CD8-positive, alpha-beta memory T cell (primary cell): ENCODE measurements at regions of chr11 and their contacts with region 1.

Region 1: GRCh38 chr11:62591448-62592145 is at the start of gene TUT1:
- DNase-seq: peak; percentile 91 to 98 (median 97)
- H3K4me3 ChIP-seq: peak within 1 kb of the TSS; percentile 83
- H3K4me3 Mint-ChIP-seq: peak within 1 kb of the TSS; percentile 84 to 98 (median 95)
- H3K27ac ChIP-seq: peak within 1 kb of the TSS; percentile 92
- H3K27ac Mint-ChIP-seq: peak within 1 kb of the TSS; percentile 84 to 99 (median 98)
- H3K4me1 ChIP-seq: peaks cover 41% of the 10 kb centered on the region
- H3K4me1 Mint-ChIP-seq: peaks cover 36 to 71% (median 59%) of the 10 kb centered on the region in 3 donors
- H3K27me3 ChIP-seq: no peaks in the 10 kb centered on the region
- H3K27me3 Mint-ChIP-seq: peaks cover 0 to 3% of the 10 kb centered on the region in 2 donors
- total RNA-seq, gene TUT1: 30.8 to 32.7 TPM

Region 2: DNA sequence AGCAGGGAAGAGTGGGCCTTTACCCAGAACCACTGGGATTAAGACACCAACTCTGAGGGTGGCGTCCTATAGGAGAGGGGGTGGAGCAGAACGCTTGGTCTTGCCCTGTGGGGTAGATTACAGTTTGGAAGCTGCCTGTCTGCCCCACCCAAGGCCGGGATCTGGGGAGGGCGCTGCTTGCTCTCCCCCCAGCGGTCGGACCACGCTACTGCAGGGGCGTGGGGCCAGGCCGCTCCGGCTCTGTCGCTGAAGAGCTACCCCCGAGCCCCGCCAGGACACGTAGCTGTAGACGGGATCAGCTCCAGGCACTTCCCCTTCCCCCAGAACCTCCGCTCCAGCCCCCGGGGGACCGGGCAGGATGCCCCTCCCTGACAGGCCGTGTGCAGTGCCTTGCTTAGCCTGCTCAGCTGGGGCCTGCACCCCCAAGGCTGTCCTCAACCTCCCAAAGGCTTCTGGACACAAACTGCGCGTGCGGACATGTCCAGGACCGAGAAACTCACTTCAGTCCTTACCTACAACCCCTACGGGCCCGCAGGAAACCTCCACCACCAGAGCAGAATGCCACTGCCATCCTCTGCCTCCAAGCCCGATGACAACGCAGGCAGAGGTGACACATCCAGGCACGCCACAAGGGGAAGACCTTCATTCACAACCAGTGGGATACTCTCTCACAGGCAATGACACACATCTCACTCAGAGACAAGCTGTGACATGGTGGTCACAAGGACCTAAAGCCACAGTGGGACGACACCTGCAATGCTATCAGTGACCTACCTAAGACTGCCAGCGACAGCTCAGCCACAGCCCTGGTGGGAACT is 48.6 kb before region 1 on chr11:
- CTCF ChIA-PET with region 1: interaction called, 28 read pairs
- POLR2A ChIA-PET with region 1: interaction called, 3 read pairs
- DNase-seq: peak; percentile 61 to 86 (median 70)
- H3K4me3 ChIP-seq: peak overlapping the region; percentile 76
- H3K4me3 Mint-ChIP-seq: peak overlapping the region; percentile 92 to 99 (median 98)
- H3K27ac ChIP-seq: peak overlapping the region; percentile 96
- H3K27ac Mint-ChIP-seq: peak overlapping the region; percentile 92 to 100 (median 97)
- H3K4me1 ChIP-seq: peaks cover 72% of the 10 kb centered on the region
- H3K4me1 Mint-ChIP-seq: peaks cover 66 to 83% (median 74%) of the 10 kb centered on the region in 3 donors
- H3K27me3 ChIP-seq: no peaks in the 10 kb centered on the region
- H3K27me3 Mint-ChIP-seq: peaks cover 0 to 3% of the 10 kb centered on the region in 2 donors

Region 3: GRCh38 chr11:62612366-62613290 is 21.0 kb after region 1 on chr11 and contains the starts of genes EML3 and ROM1:
- CTCF ChIA-PET with region 1: interaction called, 12 read pairs
- POLR2A ChIA-PET with region 1: interaction called, 32 read pairs
- DNase-seq: peak; percentile 81 to 93 (median 85)
- H3K4me3 ChIP-seq: peak within 1 kb of the TSS; percentile 76
- H3K4me3 Mint-ChIP-seq: peak within 1 kb of the TSS; percentile 89 to 99 (median 95)
- H3K27ac ChIP-seq: peak within 1 kb of the TSS; percentile 83
- H3K27ac Mint-ChIP-seq: peak within 1 kb of the TSS; percentile 92 to 99 (median 97)
- H3K4me1 ChIP-seq: peaks cover 30% of the 10 kb centered on the region
- H3K4me1 Mint-ChIP-seq: peaks cover 39 to 64% (median 42%) of the 10 kb centered on the region in 3 donors
- H3K27me3 ChIP-seq: no peaks in the 10 kb centered on the region
- H3K27me3 Mint-ChIP-seq: no peaks in the 10 kb centered on the region
- total RNA-seq, gene EML3: 133 to 134 TPM
- total RNA-seq, gene ROM1: 4.9 to 5.3 TPM

Region 4: DNA sequence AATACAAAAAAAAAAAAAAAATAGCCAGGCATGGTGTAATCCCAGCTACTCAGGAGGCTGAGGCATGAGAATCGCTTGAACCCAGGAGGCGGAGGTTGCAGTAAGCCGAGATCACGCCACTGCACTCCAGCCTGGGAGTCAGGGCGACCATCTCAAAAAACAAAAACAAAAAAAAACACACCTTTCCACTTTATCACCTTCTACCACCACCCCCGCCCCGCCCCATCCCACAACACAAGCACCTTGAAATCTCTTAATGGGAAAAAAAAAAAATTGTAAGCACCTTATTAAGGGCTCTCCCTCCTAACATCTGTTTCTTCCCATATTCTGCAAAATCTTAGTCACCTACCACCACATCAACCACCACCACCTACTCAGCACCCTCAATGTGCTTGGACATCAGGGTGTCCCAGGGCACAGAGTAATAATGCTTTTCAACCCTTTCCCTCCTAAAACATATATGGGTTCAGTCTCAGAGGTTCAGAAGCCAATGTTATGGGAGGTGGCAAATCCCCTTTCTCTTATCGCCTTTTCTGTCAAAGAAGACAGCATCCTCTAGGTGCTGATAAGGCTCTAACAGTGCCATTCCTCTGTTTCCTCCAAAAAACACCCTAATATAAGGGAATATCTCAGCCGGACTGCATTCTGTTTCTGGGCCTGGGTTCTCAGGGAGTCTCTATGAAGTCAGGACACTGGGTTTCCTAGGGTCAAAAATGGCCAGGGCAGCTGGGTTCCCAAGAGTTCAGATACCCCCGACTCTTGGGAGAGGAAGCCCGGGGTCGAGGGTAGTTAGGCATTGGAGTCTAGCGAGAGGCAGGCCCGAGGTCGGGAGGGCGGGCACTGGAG is 60.8 kb after region 1 on chr11:
- CTCF ChIA-PET with region 1: interaction called, 11 read pairs
- POLR2A ChIA-PET with region 1: interaction called, 18 read pairs
- DNase-seq: peak in 1 of 5 donors; percentile 65
- H3K4me3 ChIP-seq: peak overlapping the region; percentile 83
- H3K4me3 Mint-ChIP-seq: peak overlapping the region; percentile 85 to 95 (median 91)
- H3K27ac ChIP-seq: peak overlapping the region; percentile 87
- H3K27ac Mint-ChIP-seq: peak overlapping the region; percentile 80 to 97 (median 86)
- H3K4me1 ChIP-seq: peaks cover 15% of the 10 kb centered on the region
- H3K4me1 Mint-ChIP-seq: peaks cover 15 to 29% (median 20%) of the 10 kb centered on the region in 3 donors
- H3K27me3 ChIP-seq: no peaks in the 10 kb centered on the region
- H3K27me3 Mint-ChIP-seq: peaks cover 0 to 7% of the 10 kb centered on the region in 2 donors

Region 5: GRCh38 chr11:62694455-62695167 is 103.0 kb after region 1 on chr11:
- CTCF ChIA-PET with region 1: interaction called, 46 read pairs
- POLR2A ChIA-PET with region 1: interaction called, 3 read pairs
- DNase-seq: peak; percentile 68 to 84 (median 72)
- H3K4me3 ChIP-seq: no peak overlapping the region
- H3K4me3 Mint-ChIP-seq: no peak overlapping the region
- H3K27ac ChIP-seq: no peak overlapping the region
- H3K27ac Mint-ChIP-seq: peak overlapping the region in 5 of 8 donors; percentile 5 to 81 (median 48)
- H3K4me1 ChIP-seq: peaks cover 7% of the 10 kb centered on the region
- H3K4me1 Mint-ChIP-seq: peaks cover 5 to 8% (median 6%) of the 10 kb centered on the region in 3 donors
- H3K27me3 ChIP-seq: no peaks in the 10 kb centered on the region
- H3K27me3 Mint-ChIP-seq: peaks cover 0 to 2% of the 10 kb centered on the region in 2 donors

Region 6: GRCh38 chr11:62753736-62754603 is 162.4 kb after region 1 on chr11 and contains the start of gene ZBTB3:
- CTCF ChIA-PET with region 1: interaction called, 5 read pairs
- POLR2A ChIA-PET with region 1: interaction called, 18 read pairs
- DNase-seq: peak; percentile 95 to 99 (median 98)
- H3K4me3 ChIP-seq: peak within 1 kb of the TSS; percentile 99
- H3K4me3 Mint-ChIP-seq: peak within 1 kb of the TSS; percentile 91 to 100 (median 99)
- H3K27ac ChIP-seq: peak within 1 kb of the TSS; percentile 91
- H3K27ac Mint-ChIP-seq: peak within 1 kb of the TSS; percentile 83 to 99 (median 98)
- H3K4me1 ChIP-seq: peaks cover 22% of the 10 kb centered on the region
- H3K4me1 Mint-ChIP-seq: peaks cover 24 to 40% (median 33%) of the 10 kb centered on the region in 3 donors
- H3K27me3 ChIP-seq: no peaks in the 10 kb centered on the region
- H3K27me3 Mint-ChIP-seq: no peaks in the 10 kb centered on the region
- total RNA-seq, gene ZBTB3: 9.4 to 11.6 TPM

Region 7: DNA sequence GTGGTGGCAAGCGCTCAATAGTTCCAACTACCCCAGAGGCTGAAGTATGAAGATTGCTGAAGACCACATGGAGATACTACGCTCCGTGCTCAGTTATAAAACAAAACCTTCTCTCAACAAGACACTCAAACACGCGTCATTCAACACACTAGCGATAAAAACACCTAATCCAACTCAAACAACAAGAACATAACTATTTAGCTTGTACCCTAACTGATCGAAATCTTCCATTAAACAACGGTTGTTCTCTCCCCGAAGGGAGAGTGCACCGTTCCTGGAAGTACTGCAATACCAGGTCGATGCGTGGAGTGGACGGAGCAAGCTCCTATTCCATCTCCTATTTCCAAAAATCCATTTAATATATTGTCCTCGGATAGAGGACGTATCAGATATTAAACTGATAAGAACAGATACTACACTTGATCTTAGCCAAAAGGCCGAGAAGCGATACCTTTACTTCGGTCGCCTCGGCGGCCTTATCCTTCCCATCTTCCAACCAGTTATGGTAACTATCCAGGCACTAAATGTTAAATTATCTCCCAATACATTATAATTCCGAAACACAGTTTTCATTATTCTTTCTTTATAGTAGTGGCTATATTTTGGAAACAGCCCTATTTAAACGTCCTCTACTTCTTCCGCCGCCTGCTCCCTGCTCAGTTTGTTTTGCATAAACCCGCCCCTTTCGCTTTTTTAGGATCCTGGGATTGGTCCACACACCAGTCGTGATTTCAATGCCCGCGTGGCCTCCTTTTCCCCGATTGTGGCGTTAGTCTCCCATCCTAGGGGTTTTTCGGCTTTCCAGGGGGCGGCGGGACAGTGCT is 250.0 kb after region 1 on chr11:
- CTCF ChIA-PET with region 1: no interaction called
- POLR2A ChIA-PET with region 1: interaction called, 15 read pairs
- DNase-seq: peak; percentile 69 to 90 (median 88)
- H3K4me3 ChIP-seq: peak overlapping the region; percentile 67
- H3K4me3 Mint-ChIP-seq: no peak overlapping the region
- H3K27ac ChIP-seq: peak overlapping the region; percentile 98
- H3K27ac Mint-ChIP-seq: no peak overlapping the region
- H3K4me1 ChIP-seq: peaks cover 23% of the 10 kb centered on the region
- H3K4me1 Mint-ChIP-seq: peaks cover 22 to 28% (median 27%) of the 10 kb centered on the region in 3 donors
- H3K27me3 ChIP-seq: no peaks in the 10 kb centered on the region
- H3K27me3 Mint-ChIP-seq: peaks cover 0 to 1% of the 10 kb centered on the region in 2 donors